ENCODE measurements at regions of chr5 and their contacts with region 1.

Region 1: GRCh38 chr5:80255732-80256479 is at the start of gene SERINC5:
- DNase-seq: peak; percentile 71 to 81 (median 74)
- H3K4me3 ChIP-seq: peak within 1 kb of the TSS; percentile 76 to 91 (median 90)
- H3K4me3 Mint-ChIP-seq: peak within 1 kb of the TSS; percentile 99
- H3K27ac ChIP-seq: peak within 1 kb of the TSS; percentile 94 to 98
- H3K27ac Mint-ChIP-seq: peak within 1 kb of the TSS; percentile 96 to 100 (median 99)
- H3K4me1 ChIP-seq: peaks cover 35 to 54% of the 10 kb centered on the region in 2 donors
- H3K4me1 Mint-ChIP-seq: peaks cover 54% of the 10 kb centered on the region
- H3K27me3 ChIP-seq: no peaks in the 10 kb centered on the region
- H3K27me3 Mint-ChIP-seq: no peaks in the 10 kb centered on the region
- CTCF ChIP-seq: no peak
- polyA plus RNA-seq, gene SERINC5: 5.0 to 35.9 (median 7.3) TPM

Region 2: GRCh38 chr5:79612667-79613198 is 643.2 kb before region 1 on chr5:
- intact Hi-C with region 1: loop called in 1 of 2 experiments (anchors 5 kb)
- DNase-seq: peak; percentile 38 to 53 (median 46)
- H3K4me3 ChIP-seq: peak overlapping the region; percentile 65 to 100 (median 99)
- H3K4me3 Mint-ChIP-seq: peak overlapping the region; percentile 93 to 99
- H3K27ac ChIP-seq: peak overlapping the region; percentile 100
- H3K27ac Mint-ChIP-seq: peak overlapping the region; percentile 99 to 100 (median 99)
- H3K4me1 ChIP-seq: peaks cover 15 to 28% of the 10 kb centered on the region in 2 donors
- H3K4me1 Mint-ChIP-seq: peaks cover 32% of the 10 kb centered on the region
- H3K27me3 ChIP-seq: no peaks in the 10 kb centered on the region
- H3K27me3 Mint-ChIP-seq: no peaks in the 10 kb centered on the region
- CTCF ChIP-seq: no peak

Region 3: DNA sequence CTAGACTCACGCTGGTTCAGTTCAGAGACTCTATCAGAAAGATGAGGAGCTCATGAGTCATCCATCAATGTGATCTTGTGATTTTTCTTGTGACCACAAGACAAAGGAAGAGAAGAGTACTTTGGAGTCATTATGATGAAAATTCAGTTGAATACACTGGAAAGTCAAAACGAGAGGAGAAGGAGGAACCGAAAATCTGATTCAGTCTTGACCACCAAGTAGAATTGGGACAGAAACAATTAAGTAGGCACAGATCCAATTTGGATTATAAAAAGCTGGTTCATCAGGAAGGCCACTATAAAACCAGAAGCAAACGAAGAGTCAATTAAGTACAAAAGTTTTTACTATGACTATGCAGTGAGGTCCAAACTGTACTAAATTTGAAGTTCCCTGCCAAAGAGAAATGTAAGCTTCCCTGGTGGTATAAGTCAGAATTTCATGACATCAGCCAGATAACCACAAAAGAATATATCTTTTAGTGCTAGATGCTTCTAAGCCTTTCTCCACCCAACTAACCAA is 129.9 kb before region 1 on chr5:
- intact Hi-C with region 1: loop called (anchors 5 kb)
- DNase-seq: peak; percentile 96 to 99 (median 98)
- H3K4me3 ChIP-seq: peak overlapping the region in 1 of 3 experiments; percentile 50
- H3K4me3 Mint-ChIP-seq: peak overlapping the region; percentile 42 to 81
- H3K27ac ChIP-seq: peak overlapping the region; percentile 96 to 99
- H3K27ac Mint-ChIP-seq: peak overlapping the region; percentile 99 to 100 (median 100)
- H3K4me1 ChIP-seq: peaks cover 70% of the 10 kb centered on the region in 2 donors
- H3K4me1 Mint-ChIP-seq: peaks cover 69% of the 10 kb centered on the region
- H3K27me3 ChIP-seq: no peaks in the 10 kb centered on the region
- H3K27me3 Mint-ChIP-seq: no peaks in the 10 kb centered on the region
- CTCF ChIP-seq: peak; percentile 50

Region 4: DNA sequence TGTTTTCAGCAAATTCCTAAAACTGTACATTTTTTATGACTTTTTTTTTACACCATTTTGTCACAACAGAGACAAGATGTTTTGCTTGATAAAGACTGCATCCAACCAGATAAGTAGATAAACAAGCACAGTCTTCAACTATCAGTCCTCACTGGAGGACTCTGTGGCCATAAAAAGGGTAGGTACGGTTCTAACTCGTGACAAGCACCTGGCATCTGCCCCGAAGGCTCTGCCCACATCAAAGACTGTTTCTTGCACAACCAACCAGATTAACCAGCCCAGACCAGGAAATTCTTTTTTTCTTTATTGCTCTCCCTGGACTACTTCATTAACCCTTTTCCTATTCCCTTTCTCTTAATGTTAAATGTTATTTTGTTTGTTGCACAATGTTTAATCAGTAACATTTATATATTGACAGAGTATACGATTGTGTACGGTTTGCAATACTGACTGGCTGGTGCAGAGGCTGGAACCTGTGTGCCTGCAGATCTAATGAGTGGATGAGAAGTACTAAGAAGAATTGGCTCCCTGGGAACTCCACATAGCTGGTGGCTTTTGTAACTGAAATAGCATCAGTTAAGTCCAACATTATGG is 74.2 kb before region 1 on chr5:
- intact Hi-C with region 1: loop called in 1 of 2 experiments (anchors 10 kb)
- DNase-seq: no peak
- H3K4me3 ChIP-seq: no peak overlapping the region
- H3K4me3 Mint-ChIP-seq: no peak overlapping the region
- H3K27ac ChIP-seq: no peak overlapping the region
- H3K27ac Mint-ChIP-seq: peak overlapping the region in 3 of 7 donors; percentile 19 to 54 (median 38)
- H3K4me1 ChIP-seq: peaks cover 32 to 53% of the 10 kb centered on the region in 2 donors
- H3K4me1 Mint-ChIP-seq: peaks cover 68% of the 10 kb centered on the region
- H3K27me3 ChIP-seq: no peaks in the 10 kb centered on the region
- H3K27me3 Mint-ChIP-seq: peaks cover 0 to under 1% (median 0%) of the 10 kb centered on the region in 3 donors
- CTCF ChIP-seq: no peak

Region 5: GRCh38 chr5:80204808-80205614 is 50.9 kb before region 1 on chr5:
- intact Hi-C with region 1: no loop called
- DNase-seq: no peak
- H3K4me3 ChIP-seq: no peak overlapping the region
- H3K4me3 Mint-ChIP-seq: no peak overlapping the region
- H3K27ac ChIP-seq: peak overlapping the region in 1 of 2 donors; percentile 22
- H3K27ac Mint-ChIP-seq: peak overlapping the region in 1 of 7 donors; percentile 61
- H3K4me1 ChIP-seq: no peaks in the 10 kb centered on the region
- H3K4me1 Mint-ChIP-seq: peaks cover 17% of the 10 kb centered on the region
- H3K27me3 ChIP-seq: no peaks in the 10 kb centered on the region
- H3K27me3 Mint-ChIP-seq: peaks cover 0 to 5% (median 0%) of the 10 kb centered on the region in 3 donors
- CTCF ChIP-seq: no peak

Region 6: DNA sequence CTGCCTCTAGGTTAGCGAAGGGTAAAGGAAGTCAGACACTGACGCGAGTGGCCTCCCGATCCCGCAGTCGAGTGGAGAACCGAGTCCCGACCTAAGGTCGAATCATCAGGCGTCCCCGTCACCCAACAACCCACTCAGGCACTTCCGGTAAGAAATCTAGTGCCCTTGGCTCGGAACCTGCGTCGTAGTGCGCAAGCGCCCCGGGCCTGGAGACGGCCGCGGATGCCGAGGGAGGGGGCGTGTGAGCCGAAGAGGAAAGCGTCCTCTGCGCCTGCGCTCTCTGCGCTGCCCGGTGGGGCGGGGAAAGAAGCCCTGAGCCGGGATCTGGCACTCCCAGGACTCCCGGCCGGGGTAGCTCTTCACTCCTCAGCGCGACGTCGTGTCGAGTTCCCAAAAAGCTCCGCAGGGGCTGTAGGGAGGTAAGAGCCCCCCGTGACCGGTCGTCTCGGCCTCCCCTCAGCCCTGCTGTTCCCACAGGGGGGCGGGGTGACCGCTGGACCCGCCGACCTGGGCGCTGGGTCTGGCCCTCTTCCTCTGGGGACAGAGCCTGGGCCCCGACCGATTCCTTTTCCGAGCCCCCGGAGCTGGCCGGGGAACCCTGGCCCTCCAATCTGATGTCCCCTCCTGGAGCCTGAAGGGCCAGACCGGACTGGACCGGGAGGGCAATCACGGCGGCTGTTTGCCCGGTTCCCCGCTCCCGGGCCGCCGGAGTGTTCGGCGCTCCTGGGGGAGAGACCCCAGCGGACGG is 152.0 kb after region 1 on chr5 and contains the start of gene ZFYVE16:
- intact Hi-C with region 1: loop called in 1 of 2 experiments (anchors 5 kb)
- DNase-seq: peak; percentile 98 to 99 (median 99)
- H3K4me3 ChIP-seq: peak within 1 kb of the TSS; percentile 80 to 97 (median 95)
- H3K4me3 Mint-ChIP-seq: peak within 1 kb of the TSS; percentile 90 to 94
- H3K27ac ChIP-seq: peak within 1 kb of the TSS; percentile 93 to 100
- H3K27ac Mint-ChIP-seq: peak within 1 kb of the TSS; percentile 97 to 100 (median 99)
- H3K4me1 ChIP-seq: peaks cover 31 to 44% of the 10 kb centered on the region in 2 donors
- H3K4me1 Mint-ChIP-seq: peaks cover 40% of the 10 kb centered on the region
- H3K27me3 ChIP-seq: no peaks in the 10 kb centered on the region
- H3K27me3 Mint-ChIP-seq: peaks cover 0 to 2% (median 0%) of the 10 kb centered on the region in 3 donors
- CTCF ChIP-seq: peak; percentile 46
- polyA plus RNA-seq, gene ZFYVE16: 9.4 to 15.8 (median 10.7) TPM

Measured in CD14-positive monocyte (primary cell).